PC-9 (cell line): ENCODE measurements at regions of chr17 and their contacts with region 1.

Region 1: GRCh38 chr17:70552230-70552981 is 383.1 kb downstream of the KCNJ2 start:
- DNase-seq: no peak
- H3K4me3 ChIP-seq: no peak overlapping the region
- H3K27ac ChIP-seq: no peak overlapping the region
- H3K4me1 ChIP-seq: no peaks in the 10 kb centered on the region
- H3K27me3 ChIP-seq: no peaks in the 10 kb centered on the region
- CTCF ChIP-seq: peak; percentile 76

Region 2: GRCh38 chr17:69567130-69567529 is 985.3 kb before region 1 on chr17:
- CTCF ChIA-PET with region 1: no interaction called
- POLR2A ChIA-PET with region 1: no interaction called
- intact Hi-C with region 1: loop called (anchors 10 kb)
- DNase-seq: no peak
- H3K4me3 ChIP-seq: no peak overlapping the region
- H3K27ac ChIP-seq: no peak overlapping the region
- H3K4me1 ChIP-seq: no peaks in the 10 kb centered on the region
- H3K27me3 ChIP-seq: no peaks in the 10 kb centered on the region
- CTCF ChIP-seq: no peak

Region 3: DNA sequence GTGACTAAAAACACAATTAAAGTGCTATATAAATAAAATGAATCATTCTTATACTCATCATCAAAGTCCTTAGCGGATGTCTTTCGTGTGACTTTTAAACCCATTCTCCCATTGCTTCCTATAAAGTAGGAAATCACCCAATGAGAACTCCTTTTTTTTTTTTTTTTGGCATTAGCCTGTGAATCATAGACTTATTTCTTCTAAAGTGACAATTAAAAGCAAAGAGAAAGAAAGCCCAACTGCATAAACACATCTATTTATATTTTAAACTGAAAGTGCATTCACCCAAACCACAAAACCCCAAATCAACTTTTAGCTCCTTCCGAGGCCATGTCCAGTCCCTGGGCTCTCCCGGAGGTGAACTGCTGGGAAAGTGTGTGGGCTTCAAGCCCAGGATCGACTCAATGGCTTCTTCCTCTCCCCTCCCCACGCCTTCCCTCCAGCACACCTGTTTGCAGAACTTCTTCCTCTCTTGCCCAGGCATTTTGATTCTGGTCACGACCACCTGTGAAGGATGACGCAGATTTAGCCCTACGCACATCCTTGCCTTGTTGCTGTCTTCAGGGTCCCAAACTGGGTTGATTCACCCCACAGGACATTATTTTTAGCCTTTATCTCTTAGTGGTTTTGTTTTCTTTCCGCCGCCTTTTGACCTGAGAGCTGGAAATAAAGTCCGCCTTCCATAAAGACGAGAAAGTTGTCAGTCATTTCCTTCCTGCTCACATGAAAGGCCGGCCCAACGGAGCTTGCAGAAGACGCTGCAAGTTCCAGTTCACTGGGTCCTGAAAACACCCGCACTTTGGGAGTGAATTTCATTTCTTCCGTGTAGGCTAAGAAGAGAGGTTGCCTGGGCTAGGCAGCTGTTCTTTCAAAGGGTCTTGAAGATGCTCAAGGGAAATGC is 971.1 kb before region 1 on chr17:
- CTCF ChIA-PET with region 1: interaction called, 16 read pairs
- POLR2A ChIA-PET with region 1: no interaction called
- intact Hi-C with region 1: no loop called
- DNase-seq: no peak
- H3K4me3 ChIP-seq: no peak overlapping the region
- H3K27ac ChIP-seq: no peak overlapping the region
- H3K4me1 ChIP-seq: peaks cover 4% of the 10 kb centered on the region; the same call in 1 of the 2 replicates
- H3K27me3 ChIP-seq: no peaks in the 10 kb centered on the region
- CTCF ChIP-seq: no peak

Region 4: DNA sequence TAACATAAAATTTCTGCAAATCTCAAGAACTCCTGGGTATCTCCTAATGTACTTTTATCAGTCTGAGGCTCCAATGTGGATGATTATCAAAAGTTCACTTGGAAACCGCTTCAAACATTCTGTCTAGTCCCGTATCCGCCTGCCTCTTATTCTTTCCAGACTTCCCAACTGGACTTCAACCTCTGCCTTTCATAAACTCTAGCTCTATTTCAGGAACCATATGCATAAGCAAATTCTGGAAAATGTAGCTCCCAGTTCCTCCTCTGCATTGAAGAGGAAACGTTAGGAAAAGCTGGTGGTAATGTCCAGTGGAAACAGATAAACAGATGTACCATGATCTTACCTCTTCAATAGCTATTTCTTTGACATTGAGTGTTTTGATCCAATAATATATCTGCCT is 98.0 kb before region 1 on chr17:
- CTCF ChIA-PET with region 1: no interaction called
- POLR2A ChIA-PET with region 1: no interaction called
- intact Hi-C with region 1: no loop called
- DNase-seq: no peak
- H3K4me3 ChIP-seq: no peak overlapping the region
- H3K27ac ChIP-seq: no peak overlapping the region
- H3K4me1 ChIP-seq: no peaks in the 10 kb centered on the region
- H3K27me3 ChIP-seq: no peaks in the 10 kb centered on the region
- CTCF ChIP-seq: no peak